Activated T-helper 1 cell treated with anti-CD3 and anti-CD28 coated beads, Interleukin-12 subunit alpha, Interleukin-12 subunit beta, Interleukin-2, Interleukin-4 antibody, amounts not matched to agents 30 ng/mL and 10 ng/mL and 1 ng/mL, durations not matched to agents 14 hours and 24 hours and 36 hours (primary cell): ENCODE measurements at regions of chr22 and their contacts with region 1.

Region 1: GRCh38 chr22:32528984-32529982 is 54.7 kb downstream of the FBXO7 start:
- DNase-seq: peak; percentile 24
- H3K4me3 Mint-ChIP-seq: no peak overlapping the region
- H3K27ac Mint-ChIP-seq: no peak overlapping the region
- H3K4me1 Mint-ChIP-seq: no peaks in the 10 kb centered on the region
- H3K27me3 Mint-ChIP-seq: no peaks in the 10 kb centered on the region

Region 2: GRCh38 chr22:32596471-32596870 is 67.2 kb after region 1 on chr22:
- intact Hi-C with region 1: no loop called
- DNase-seq: no peak
- H3K4me3 Mint-ChIP-seq: no peak overlapping the region
- H3K27ac Mint-ChIP-seq: no peak overlapping the region
- H3K4me1 Mint-ChIP-seq: no peaks in the 10 kb centered on the region
- H3K27me3 Mint-ChIP-seq: no peaks in the 10 kb centered on the region

Region 3: DNA sequence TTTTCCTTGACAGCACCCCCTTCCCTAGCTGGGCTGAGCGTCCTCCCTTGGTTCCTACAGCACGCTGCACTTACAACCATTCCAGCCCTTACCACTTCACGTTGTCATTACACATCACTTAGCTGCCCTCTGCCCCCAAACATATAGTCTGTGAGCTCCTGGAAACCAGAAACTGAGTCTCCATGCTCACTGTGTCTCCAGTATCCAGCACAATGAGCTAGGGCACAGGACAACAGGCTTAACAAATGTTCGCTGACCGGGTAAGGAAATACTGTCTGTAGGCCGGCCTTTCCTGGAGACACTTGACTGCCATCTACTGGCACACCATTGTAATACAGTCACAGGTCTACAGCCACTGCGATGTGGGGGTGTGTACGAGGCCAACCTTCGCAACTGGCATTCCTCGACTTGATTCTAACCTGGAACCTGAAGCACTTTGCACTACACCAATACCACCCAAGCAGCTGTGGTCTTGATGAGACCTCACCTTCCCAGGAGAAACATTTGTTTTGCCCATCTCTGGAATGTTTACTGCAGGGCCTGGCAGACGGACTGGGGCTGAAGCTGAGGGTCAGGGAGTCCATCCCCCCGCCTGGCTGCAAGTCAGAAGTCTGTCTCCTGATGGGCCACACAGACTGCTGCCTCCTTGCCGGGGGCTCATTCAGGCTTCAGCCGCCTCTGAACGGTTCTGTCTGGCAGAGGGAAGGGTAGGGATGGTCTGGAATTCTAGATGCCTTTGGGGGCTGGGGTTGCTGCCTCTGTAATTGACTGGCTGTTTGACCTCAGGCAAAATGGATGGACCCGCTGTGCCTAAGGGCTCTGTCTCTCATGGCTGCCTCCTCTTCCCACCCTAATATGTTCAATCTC is 456.8 kb after region 1 on chr22:
- intact Hi-C with region 1: loop called (anchors 1 kb)
- DNase-seq: peak; percentile 28
- H3K4me3 Mint-ChIP-seq: no peak overlapping the region
- H3K27ac Mint-ChIP-seq: no peak overlapping the region
- H3K4me1 Mint-ChIP-seq: no peaks in the 10 kb centered on the region
- H3K27me3 Mint-ChIP-seq: no peaks in the 10 kb centered on the region